ENCODE measurements at regions of chr11 and their contacts with region 1.

Region 1: GRCh38 chr11:62108017-62108750 is 15.6 kb upstream of the INCENP start:
- DNase-seq: no peak
- H3K4me3 ChIP-seq: no peak overlapping the region
- H3K27ac ChIP-seq: peak overlapping the region; percentile 44 to 86
- H3K4me1 ChIP-seq: peaks cover 0 to 56% (median 29%) of the 10 kb centered on the region in 4 donors
- H3K27me3 ChIP-seq: no peaks in the 10 kb centered on the region
- CTCF ChIP-seq: peak; percentile 83 to 88

Region 2: GRCh38 chr11:61967116-61967923 is 140.9 kb before region 1 on chr11 and contains the start of gene FTH1:
- intact Hi-C with region 1: loop called (anchors 5 kb)
- DNase-seq: peak; percentile 87 to 96
- H3K4me3 ChIP-seq: peak within 1 kb of the TSS; percentile 68 to 95
- H3K27ac ChIP-seq: peak within 1 kb of the TSS; percentile 98 to 100
- H3K4me1 ChIP-seq: peaks cover 6 to 79% (median 63%) of the 10 kb centered on the region in 4 donors
- H3K27me3 ChIP-seq: no peaks in the 10 kb centered on the region
- CTCF ChIP-seq: peak in 1 of 2 experiments; percentile 5

Measured in tibial artery (tissue), 4 donors.